CD4-positive, alpha-beta memory T cell (primary cell): ENCODE measurements at regions of chr5 and their contacts with region 1.

Region 1: DNA sequence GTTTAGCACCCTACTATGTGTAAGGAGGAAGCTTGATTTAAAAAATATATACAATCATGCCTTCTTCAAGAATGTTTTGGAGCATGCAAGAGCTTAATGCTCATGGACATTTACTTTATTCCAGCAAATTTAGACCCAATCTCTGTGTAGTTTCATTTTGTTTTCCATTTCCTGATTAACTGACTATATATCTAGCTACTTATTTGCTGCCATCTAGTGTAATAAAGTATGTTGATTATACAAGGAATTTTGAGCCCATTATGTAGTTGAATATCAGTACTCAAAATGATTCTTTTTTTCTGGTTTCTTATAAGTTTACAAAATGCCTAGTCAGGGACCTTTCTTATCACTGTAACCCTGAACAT is 100.0 kb upstream of the CCDC152 start:
- DNase-seq: no peak
- H3K4me3 ChIP-seq: no peak overlapping the region
- H3K4me3 Mint-ChIP-seq: peak overlapping the region in 4 of 8 donors; percentile 20 to 47 (median 36)
- H3K27ac ChIP-seq: no peak overlapping the region
- H3K27ac Mint-ChIP-seq: no peak overlapping the region
- H3K4me1 ChIP-seq: no peaks in the 10 kb centered on the region
- H3K4me1 Mint-ChIP-seq: no peaks in the 10 kb centered on the region
- H3K27me3 ChIP-seq: no peaks in the 10 kb centered on the region
- H3K27me3 Mint-ChIP-seq: peaks cover 1 to 6% of the 10 kb centered on the region in 2 donors

Region 2: GRCh38 chr5:42645138-42645537 is 11.5 kb before region 1 on chr5:
- CTCF ChIA-PET with region 1: interaction called, 10 read pairs
- POLR2A ChIA-PET with region 1: no interaction called
- intact Hi-C with region 1: no loop called
- DNase-seq: no peak
- H3K4me3 ChIP-seq: no peak overlapping the region
- H3K4me3 Mint-ChIP-seq: no peak overlapping the region
- H3K27ac ChIP-seq: no peak overlapping the region
- H3K27ac Mint-ChIP-seq: no peak overlapping the region
- H3K4me1 ChIP-seq: no peaks in the 10 kb centered on the region
- H3K4me1 Mint-ChIP-seq: no peaks in the 10 kb centered on the region
- H3K27me3 ChIP-seq: no peaks in the 10 kb centered on the region
- H3K27me3 Mint-ChIP-seq: peaks cover 7 to 10% of the 10 kb centered on the region in 2 donors